AG04450 (cell line): ENCODE measurements at regions of chr6 and their contacts with region 1.

Region 1: GRCh38 chr6:131694831-131695426 is 6.3 kb downstream of the OR2A4 start:
- DNase-seq: peak; percentile 50
- H3K4me3 ChIP-seq: no peak overlapping the region
- H3K27ac ChIP-seq: no peak overlapping the region
- H3K27me3 ChIP-seq: no peaks in the 10 kb centered on the region
- CTCF ChIP-seq: peak; percentile 98

Region 2: DNA sequence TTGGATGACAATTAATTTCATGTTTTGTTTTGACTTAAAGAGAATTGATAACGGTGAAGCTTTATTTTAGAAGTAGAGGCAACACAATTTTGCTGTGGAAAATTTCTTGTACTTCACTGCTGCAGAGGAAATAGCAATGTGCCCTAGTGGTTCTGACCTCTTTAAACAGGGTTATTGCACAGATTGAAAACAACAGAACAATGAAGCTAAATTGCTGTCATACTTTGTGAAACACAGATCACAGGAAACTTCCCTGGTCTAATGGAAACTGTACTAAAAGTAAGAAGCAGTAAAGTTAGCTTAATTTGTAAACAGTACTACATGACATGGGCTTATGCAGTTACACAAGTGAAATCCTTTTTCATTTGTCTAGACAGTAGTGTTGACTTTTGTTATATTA is 25.0 kb before region 1 on chr6:
- CTCF ChIA-PET with region 1: interaction called, 18 read pairs
- POLR2A ChIA-PET with region 1: no interaction called
- DNase-seq: no peak
- H3K4me3 ChIP-seq: no peak overlapping the region
- H3K27ac ChIP-seq: no peak overlapping the region
- H3K27me3 ChIP-seq: no peaks in the 10 kb centered on the region
- CTCF ChIP-seq: no peak

Region 3: GRCh38 chr6:131724114-131724513 is 29.2 kb after region 1 on chr6:
- CTCF ChIA-PET with region 1: interaction called, 33 read pairs
- POLR2A ChIA-PET with region 1: no interaction called
- DNase-seq: no peak
- H3K4me3 ChIP-seq: no peak overlapping the region
- H3K27ac ChIP-seq: no peak overlapping the region
- H3K27me3 ChIP-seq: no peaks in the 10 kb centered on the region
- CTCF ChIP-seq: no peak

Region 4: GRCh38 chr6:131877999-131878789 is 183.3 kb after region 1 on chr6:
- CTCF ChIA-PET with region 1: interaction called, 12 read pairs
- POLR2A ChIA-PET with region 1: no interaction called
- DNase-seq: no peak
- H3K4me3 ChIP-seq: no peak overlapping the region
- H3K27ac ChIP-seq: no peak overlapping the region
- H3K27me3 ChIP-seq: no peaks in the 10 kb centered on the region
- CTCF ChIP-seq: no peak

Region 5: DNA sequence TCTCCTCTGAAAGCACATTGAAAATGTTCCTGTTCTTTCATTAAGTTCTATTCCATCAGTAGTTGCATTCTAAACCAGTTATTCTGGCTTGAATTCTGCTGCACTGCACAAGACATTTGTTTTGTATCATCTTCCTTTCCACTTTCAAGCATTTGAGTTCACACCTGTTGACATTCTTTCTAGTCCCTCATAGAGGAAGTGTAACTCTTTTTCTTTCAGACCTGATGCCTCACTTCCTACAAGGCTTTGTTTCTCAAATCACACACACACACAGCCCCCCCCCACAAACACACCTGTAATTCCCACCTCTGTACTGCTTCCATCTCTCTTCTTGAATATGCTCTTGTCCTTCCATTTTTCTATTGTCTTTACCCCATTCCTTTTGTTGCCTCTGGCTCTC is 205.3 kb after region 1 on chr6:
- CTCF ChIA-PET with region 1: interaction called, 18 read pairs
- POLR2A ChIA-PET with region 1: no interaction called
- DNase-seq: no peak
- H3K4me3 ChIP-seq: no peak overlapping the region
- H3K27ac ChIP-seq: no peak overlapping the region
- H3K27me3 ChIP-seq: no peaks in the 10 kb centered on the region
- CTCF ChIP-seq: no peak

Region 6: GRCh38 chr6:131923356-131923755 is 228.4 kb after region 1 on chr6:
- CTCF ChIA-PET with region 1: interaction called, 89 read pairs
- POLR2A ChIA-PET with region 1: no interaction called
- DNase-seq: no peak
- H3K4me3 ChIP-seq: no peak overlapping the region
- H3K27ac ChIP-seq: no peak overlapping the region
- H3K27me3 ChIP-seq: no peaks in the 10 kb centered on the region
- CTCF ChIP-seq: peak; percentile 53